ENCODE measurements at regions of chr22 and their contacts with region 1.

Region 1: GRCh38 chr22:36239401-36240171 is at the start of gene APOL2:
- DNase-seq: peak; percentile 93
- ATAC-seq: peak; percentile 96
- H3K4me3 Mint-ChIP-seq: peak within 1 kb of the TSS; percentile 98
- H3K27ac Mint-ChIP-seq: peak within 1 kb of the TSS; percentile 99
- H3K4me1 Mint-ChIP-seq: peaks cover 42% of the 10 kb centered on the region
- H3K27me3 Mint-ChIP-seq: no peaks in the 10 kb centered on the region
- total RNA-seq, gene APOL2: 64.5 TPM

Region 2: DNA sequence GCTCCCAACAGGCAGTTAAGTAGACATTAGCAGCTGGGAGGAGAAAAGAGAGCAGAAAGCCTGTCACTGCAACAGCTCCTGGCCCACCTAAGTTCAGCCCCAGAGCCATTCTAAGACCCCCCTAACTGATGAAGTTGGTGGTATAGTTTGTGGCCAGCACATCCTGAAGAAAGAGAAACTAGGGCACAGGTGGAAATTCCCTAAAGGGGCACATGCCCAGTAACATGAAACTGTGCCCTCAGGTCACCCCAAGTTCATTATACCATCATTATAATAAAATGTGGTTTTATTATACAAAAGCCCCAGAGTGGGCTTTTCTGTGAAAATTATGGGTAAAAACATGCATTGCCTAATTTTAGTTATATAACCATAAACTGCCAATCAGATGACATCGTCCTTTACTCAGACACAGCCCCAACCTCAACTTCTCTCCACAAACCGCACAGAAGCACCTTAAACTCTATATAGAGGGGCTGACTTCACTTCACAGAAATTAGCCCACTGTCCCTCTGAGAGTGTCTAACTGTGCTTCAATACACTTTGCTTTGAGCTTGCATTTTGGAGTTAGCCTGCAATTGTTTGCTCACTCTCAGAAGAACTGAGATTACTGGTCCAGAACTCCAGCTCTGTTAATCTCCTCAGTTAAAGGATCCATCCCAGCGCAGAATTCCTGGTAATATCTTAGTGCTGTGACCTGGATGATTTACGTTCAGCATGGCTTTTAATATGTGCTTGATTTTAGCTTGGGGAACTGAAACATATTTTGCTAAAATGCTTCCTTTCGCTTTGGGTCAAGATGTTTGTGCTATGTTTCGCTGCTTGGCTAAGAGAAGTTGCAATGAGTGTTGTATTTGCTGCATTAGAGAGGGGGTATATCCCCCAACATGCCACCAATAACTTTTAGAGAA is 77.2 kb before region 1 on chr22:
- CTCF ChIA-PET with region 1: interaction called, 4 read pairs
- POLR2A ChIA-PET with region 1: no interaction called
- intact Hi-C with region 1: loop called in 1 of 2 experiments (anchors 2 kb)
- DNase-seq: peak; percentile 41
- ATAC-seq: no peak
- H3K4me3 Mint-ChIP-seq: no peak overlapping the region
- H3K27ac Mint-ChIP-seq: peak overlapping the region; percentile 96
- H3K4me1 Mint-ChIP-seq: peaks cover 66% of the 10 kb centered on the region
- H3K27me3 Mint-ChIP-seq: no peaks in the 10 kb centered on the region

Region 3: DNA sequence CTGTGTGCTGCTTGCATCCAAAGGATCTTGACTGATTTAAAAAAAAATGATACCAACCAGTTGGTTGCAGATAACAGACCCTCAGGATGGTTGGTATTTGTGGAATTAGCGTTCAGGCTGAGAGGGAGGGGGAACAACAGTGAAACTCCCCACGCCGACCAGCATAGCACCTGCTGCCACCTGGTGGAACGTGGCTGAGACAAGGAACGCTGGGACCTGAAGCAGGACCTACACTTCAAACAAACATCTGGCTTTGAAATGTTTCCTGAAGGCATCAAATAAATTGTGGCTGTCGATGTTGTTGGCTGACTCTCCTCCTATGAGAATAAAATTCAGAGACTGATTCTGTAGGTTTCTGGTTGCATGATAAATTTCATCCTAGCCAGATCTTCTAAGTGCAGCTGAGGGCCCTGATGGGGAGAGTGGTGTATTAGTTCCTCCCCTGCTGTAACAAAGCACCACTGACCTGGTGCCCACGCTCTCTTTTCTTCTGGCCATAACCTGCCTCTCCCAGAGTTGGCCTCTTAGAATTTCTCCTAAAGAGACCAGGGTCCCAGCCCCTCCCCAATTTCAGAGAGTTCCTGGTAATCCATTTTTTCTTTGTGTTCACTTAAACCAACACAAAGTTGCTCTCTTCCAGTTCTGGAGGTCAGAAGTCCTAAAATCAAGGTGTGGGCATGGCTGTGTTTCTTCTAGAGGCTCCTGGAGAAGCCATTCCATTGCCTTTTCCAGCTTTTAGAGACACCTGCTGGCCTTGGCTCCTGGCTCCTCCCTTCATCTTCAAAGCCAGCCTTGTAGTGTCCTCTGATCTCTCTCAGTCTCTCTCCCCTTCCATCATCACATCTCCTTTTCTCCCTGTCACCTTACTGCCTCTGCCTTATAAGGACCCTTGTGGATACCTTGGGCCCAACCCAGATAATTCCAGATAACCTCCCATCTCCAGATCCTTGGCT is 17.5 kb before region 1 on chr22:
- CTCF ChIA-PET with region 1: interaction called, 14 read pairs
- POLR2A ChIA-PET with region 1: interaction called, 6 read pairs
- intact Hi-C with region 1: no loop called
- DNase-seq: peak; percentile 75
- ATAC-seq: peak; percentile 74
- H3K4me3 Mint-ChIP-seq: no peak overlapping the region
- H3K27ac Mint-ChIP-seq: no peak overlapping the region
- H3K4me1 Mint-ChIP-seq: peaks cover 5% of the 10 kb centered on the region
- H3K27me3 Mint-ChIP-seq: peaks cover 1% of the 10 kb centered on the region

Region 4: DNA sequence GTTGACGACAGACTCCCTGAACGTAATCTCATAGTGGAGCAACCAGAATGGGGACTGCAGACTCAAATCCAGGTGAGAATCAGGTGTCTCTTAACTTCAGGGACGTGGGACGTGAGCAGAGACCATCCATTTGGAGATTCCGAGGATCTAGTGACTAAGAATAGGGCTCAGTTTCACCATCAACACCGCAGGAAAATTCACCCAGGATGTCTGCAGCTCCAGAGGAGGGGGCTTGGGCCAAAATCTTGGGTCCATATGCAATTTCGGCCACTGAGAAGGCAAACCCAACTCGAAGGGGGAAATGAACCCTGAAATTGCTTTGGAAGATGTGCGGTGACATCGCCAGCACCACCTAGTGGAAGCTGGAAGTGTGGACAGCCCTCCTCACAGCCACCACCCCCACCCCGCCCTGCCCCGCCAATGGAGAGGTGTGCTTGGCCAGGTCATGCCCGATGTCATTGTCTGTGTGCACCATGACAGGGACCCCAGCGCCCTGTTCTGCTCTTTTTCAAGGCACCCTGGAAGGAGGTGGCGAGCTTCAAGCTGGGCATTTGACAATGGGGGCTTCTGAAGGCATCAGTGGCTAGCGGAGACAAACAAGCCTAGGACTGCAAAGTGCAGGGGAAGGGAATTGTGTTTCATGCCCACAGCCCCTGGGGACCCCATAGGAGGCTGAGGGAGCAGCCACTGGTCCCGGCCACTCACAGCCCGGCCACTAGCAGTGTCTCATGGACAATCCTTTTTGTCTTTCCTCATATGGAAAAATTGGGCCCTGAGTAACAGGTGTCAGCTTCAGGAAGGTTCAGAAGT is 38.1 kb after region 1 on chr22:
- CTCF ChIA-PET with region 1: interaction called, 12 read pairs
- POLR2A ChIA-PET with region 1: no interaction called
- intact Hi-C with region 1: loop called (anchors 2 to 5 kb)
- DNase-seq: peak; percentile 88
- ATAC-seq: peak; percentile 82
- H3K4me3 Mint-ChIP-seq: no peak overlapping the region
- H3K27ac Mint-ChIP-seq: peak overlapping the region; percentile 49
- H3K4me1 Mint-ChIP-seq: peaks cover 34% of the 10 kb centered on the region
- H3K27me3 Mint-ChIP-seq: no peaks in the 10 kb centered on the region

Region 5: DNA sequence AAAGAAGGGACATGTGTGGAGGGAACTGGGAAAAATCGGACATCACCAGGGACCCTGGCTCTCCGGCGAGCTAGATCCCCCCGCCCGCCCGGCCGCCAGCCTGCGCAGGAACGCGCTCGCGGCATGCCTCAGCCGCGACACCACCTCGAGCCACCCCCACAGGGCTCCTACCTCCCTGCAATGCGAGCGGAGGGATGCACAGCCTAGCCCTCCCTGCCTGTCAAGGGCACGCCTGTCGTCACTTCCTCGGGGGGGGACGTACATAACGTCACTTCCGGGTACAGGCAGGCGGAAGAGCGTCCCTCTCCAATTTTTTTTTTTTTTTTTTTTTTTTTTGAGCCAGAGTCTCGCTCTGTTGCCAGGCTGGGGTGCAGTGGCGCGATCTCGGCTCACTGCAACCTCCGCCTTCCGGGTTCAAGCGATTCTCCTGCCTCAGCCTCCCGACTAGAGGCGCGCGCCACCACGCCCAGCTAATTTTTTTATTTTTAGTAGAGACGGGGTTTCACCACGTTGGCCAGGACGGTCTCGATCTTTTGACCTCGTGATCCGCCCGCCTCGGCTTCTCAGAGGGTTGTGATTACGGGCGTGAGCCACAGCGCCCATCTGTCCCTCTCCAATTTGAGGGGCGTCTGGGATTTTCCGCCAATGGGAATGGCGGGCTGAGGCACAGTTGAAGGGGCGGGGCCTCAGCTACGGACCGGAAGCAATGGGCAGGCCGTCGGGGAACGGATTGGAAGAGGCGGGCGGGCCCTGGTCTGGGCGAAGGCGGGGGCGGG is 242.0 kb after region 1 on chr22 and contains the start of gene TXN2:
- CTCF ChIA-PET with region 1: no interaction called
- POLR2A ChIA-PET with region 1: interaction called, 6 read pairs
- intact Hi-C with region 1: loop called in 1 of 2 experiments (anchors 1 kb)
- DNase-seq: peak; percentile 97
- ATAC-seq: peak; percentile 89
- H3K4me3 Mint-ChIP-seq: peak within 1 kb of the TSS; percentile 81
- H3K27ac Mint-ChIP-seq: peak within 1 kb of the TSS; percentile 94
- H3K4me1 Mint-ChIP-seq: peaks cover 19% of the 10 kb centered on the region
- H3K27me3 Mint-ChIP-seq: no peaks in the 10 kb centered on the region
- total RNA-seq, gene TXN2: 95.5 to 99.1 TPM